Activated CD8-positive, alpha-beta T cell treated with anti-CD3 and anti-CD28 coated beads for 36 hours (primary cell): ENCODE measurements at regions of chr5 and their contacts with region 1.

Region 1: GRCh38 chr5:146533260-146533857 is 17.4 kb upstream of the GPR151 start:
- DNase-seq: peak; percentile 89
- ATAC-seq: peak; percentile 95
- H3K4me3 Mint-ChIP-seq: no peak overlapping the region
- H3K27ac Mint-ChIP-seq: no peak overlapping the region
- H3K4me1 Mint-ChIP-seq: peaks cover 3% of the 10 kb centered on the region
- H3K27me3 Mint-ChIP-seq: peaks cover 1% of the 10 kb centered on the region
- CTCF ChIP-seq: peak; percentile 73

Region 2: DNA sequence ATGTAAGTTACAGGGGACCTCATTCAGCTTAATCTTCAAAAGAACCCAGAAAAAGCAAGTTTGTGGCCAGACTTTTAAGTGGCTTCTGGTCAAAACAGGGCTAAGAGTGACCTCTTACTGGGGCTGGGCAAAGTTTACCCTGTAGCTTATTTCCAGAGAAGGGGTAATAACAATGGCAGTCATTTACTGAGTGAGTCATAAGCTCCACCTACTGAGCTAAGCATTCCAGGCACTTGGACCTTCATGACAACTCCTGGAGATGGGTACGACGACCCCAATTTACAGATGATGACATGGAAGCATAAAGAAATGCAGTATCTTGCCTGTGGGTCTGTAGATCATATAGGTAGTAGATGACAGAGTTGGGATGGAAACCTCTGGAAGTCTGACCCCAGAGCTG is 12.6 kb before region 1 on chr5:
- CTCF ChIA-PET with region 1: interaction called, 34 read pairs
- POLR2A ChIA-PET with region 1: no interaction called
- intact Hi-C with region 1: no loop called
- DNase-seq: no peak
- ATAC-seq: no peak
- H3K4me3 Mint-ChIP-seq: no peak overlapping the region
- H3K27ac Mint-ChIP-seq: no peak overlapping the region
- H3K4me1 Mint-ChIP-seq: no peaks in the 10 kb centered on the region
- H3K27me3 Mint-ChIP-seq: peaks cover 2% of the 10 kb centered on the region
- CTCF ChIP-seq: no peak

Region 3: GRCh38 chr5:146606893-146607292 is 73.5 kb after region 1 on chr5:
- CTCF ChIA-PET with region 1: no interaction called
- POLR2A ChIA-PET with region 1: no interaction called
- intact Hi-C with region 1: no loop called
- DNase-seq: no peak
- ATAC-seq: no peak
- H3K4me3 Mint-ChIP-seq: no peak overlapping the region
- H3K27ac Mint-ChIP-seq: no peak overlapping the region
- H3K4me1 Mint-ChIP-seq: no peaks in the 10 kb centered on the region
- H3K27me3 Mint-ChIP-seq: no peaks in the 10 kb centered on the region
- CTCF ChIP-seq: no peak